Activated T-helper 2 cell treated with anti-CD3 and anti-CD28 coated beads, Interferon-gamma antibody, Interleukin-2, Interleukin-4, amounts not matched to agents 10 μg/mL and 5 μg/mL and 100 μg/mL, durations not matched to agents 14 hours and 24 hours and 36 hours (primary cell): ENCODE measurements at regions of chr7 and their contacts with region 1.

Region 1: GRCh38 chr7:39948956-39949928 is 814 bp upstream of the CDK13 start:
- DNase-seq: peak; percentile 99
- H3K4me3 Mint-ChIP-seq: peak overlapping the region; percentile 88
- H3K27ac Mint-ChIP-seq: peak overlapping the region; percentile 99
- H3K4me1 Mint-ChIP-seq: peaks cover 25% of the 10 kb centered on the region
- H3K27me3 Mint-ChIP-seq: no peaks in the 10 kb centered on the region

Region 2: DNA sequence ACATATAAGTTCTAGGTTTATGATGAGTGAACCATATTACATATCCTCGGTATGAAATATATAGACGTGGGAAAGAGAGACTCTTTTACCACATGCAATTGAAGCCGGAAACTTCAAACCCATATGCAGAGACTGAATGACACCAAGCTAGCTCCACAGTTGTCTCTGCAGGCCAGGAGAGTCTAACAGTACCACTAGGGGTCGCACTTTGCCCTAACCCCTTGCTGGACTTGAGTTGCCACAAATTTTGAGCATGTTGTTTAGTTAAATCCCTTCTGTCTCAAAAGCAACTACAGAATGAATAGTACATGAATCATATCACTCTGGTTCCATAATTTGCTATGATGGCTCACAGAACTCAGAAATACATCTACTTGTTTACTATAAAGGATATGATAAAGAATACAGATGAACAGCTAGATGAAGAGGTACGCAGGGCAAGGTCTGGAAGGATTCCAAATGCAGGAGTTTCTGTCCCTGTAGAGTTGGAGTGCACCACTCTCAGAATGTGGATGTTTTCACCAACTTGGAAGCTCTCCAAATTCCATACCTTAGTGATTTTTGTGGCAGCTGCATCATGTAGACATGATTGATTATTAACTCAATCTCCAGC is 495.4 kb before region 1 on chr7:
- intact Hi-C with region 1: no loop called
- DNase-seq: peak; percentile 37
- H3K4me3 Mint-ChIP-seq: no peak overlapping the region
- H3K27ac Mint-ChIP-seq: no peak overlapping the region
- H3K4me1 Mint-ChIP-seq: no peaks in the 10 kb centered on the region
- H3K27me3 Mint-ChIP-seq: peaks cover 7% of the 10 kb centered on the region

Region 3: GRCh38 chr7:39589323-39590111 is 359.7 kb before region 1 on chr7:
- intact Hi-C with region 1: loop called (anchors 2 kb)
- DNase-seq: peak; percentile 65
- H3K4me3 Mint-ChIP-seq: no peak overlapping the region
- H3K27ac Mint-ChIP-seq: peak overlapping the region; percentile 61
- H3K4me1 Mint-ChIP-seq: peaks cover 42% of the 10 kb centered on the region
- H3K27me3 Mint-ChIP-seq: peaks cover 2% of the 10 kb centered on the region

Region 4: DNA sequence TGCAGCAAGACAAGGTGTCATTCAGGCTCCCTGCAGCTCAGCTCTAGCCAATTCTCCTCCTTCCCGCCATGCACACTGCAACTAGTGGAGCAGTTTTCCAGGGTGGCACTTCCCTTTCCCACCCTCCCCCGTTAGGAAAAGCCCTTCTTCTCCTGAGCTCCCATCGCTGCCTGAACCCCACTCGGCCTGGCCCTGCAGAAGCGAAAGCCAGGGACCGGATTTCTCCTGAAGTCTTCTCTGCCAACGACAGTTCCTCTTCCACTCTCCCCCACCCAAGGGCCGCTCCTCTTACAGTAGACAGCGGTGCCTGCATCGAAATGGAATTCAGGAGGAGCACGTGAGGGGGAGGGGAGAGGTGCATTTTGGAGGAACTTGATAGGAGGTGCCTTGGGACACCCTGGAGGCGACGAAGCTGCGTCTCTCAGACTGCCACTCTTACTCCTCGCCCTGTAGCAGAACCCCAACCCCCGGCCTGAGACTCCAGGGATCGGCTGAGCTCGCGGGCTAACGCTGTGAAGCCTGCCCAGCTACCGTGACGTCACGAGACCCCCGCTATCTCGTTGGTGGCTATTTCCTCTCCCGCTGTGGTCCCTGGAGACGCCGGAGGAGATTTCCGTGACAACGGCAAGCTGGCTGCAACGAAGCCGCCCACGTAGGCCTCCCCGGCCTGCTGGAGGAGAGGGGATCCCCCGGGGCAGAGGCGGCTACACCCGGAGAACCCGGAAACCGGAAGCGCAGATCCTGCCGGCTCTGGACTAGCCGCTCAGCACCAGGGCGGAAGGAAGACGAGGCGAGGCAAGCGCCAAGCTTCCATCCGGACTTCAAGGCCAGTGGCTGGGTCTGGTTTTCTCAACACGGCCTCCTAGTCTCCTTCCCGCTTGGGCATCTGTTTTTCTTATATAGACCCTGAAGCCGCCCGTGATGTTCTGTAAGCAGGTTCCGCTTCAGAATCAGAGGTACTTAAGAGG is 216.1 kb before region 1 on chr7:
- intact Hi-C with region 1: loop called (anchors 5 kb)
- DNase-seq: peak; percentile 95
- H3K4me3 Mint-ChIP-seq: peak overlapping the region; percentile 85
- H3K27ac Mint-ChIP-seq: peak overlapping the region; percentile 81
- H3K4me1 Mint-ChIP-seq: peaks cover 33% of the 10 kb centered on the region
- H3K27me3 Mint-ChIP-seq: peaks cover 4% of the 10 kb centered on the region

Region 5: DNA sequence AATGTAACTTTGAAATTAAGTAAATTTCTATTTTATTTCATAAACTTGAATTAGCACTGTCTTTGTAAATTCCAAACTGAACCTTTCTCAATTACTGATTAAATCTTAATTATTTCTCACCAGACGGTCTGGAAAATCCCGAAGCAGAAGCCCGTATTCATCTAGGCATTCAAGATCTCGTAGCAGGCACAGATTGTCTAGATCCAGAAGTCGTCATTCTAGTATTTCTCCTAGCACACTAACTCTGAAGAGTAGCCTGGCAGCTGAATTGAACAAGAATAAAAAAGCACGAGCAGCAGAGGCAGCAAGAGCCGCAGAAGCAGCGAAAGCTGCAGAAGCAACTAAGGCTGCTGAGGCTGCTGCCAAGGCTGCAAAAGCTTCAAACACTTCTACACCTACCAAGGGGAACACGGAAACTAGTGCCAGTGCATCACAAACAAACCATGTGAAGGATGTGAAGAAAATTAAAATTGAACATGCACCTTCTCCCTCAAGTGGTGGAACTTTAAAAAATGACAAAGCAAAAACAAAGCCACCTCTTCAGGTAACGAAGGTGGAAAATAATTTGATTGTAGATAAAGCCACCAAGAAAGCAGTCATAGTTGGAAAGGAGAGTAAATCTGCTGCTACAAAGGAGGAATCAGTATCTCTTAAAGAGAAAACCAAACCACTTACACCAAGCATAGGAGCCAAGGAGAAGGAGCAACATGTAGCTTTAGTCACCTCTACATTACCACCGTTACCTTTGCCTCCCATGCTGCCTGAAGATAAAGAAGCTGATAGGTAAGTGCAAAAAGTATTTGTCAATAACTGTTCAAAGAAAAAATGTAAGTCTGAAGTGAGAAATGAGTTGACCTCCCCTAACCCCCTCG is 38.5 kb after region 1 on chr7:
- intact Hi-C with region 1: loop called (anchors 2 kb)
- DNase-seq: no peak
- H3K4me3 Mint-ChIP-seq: no peak overlapping the region
- H3K27ac Mint-ChIP-seq: no peak overlapping the region
- H3K4me1 Mint-ChIP-seq: peaks cover 37% of the 10 kb centered on the region
- H3K27me3 Mint-ChIP-seq: no peaks in the 10 kb centered on the region

Region 6: DNA sequence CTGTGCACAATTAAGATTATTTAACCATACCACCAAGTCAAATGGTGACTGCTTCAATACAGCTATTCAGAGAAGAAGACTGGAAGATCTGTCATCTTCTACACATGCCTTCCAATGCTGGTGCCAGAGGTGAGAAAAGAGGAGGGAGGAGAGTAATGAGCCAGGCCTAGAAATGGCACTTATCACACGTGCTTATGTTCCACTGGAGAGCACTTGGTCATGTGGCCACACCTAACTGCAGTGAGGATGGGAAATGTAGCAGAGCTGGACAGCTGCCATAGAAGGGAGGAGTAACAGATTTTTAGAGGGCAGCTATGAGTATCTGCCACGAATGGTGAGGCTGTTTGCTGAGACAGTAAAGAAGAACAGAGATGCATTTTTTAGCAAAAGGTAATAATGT is 108.0 kb after region 1 on chr7:
- intact Hi-C with region 1: loop called (anchors 1 kb)
- DNase-seq: no peak
- H3K4me3 Mint-ChIP-seq: no peak overlapping the region
- H3K27ac Mint-ChIP-seq: no peak overlapping the region
- H3K4me1 Mint-ChIP-seq: peaks cover 5% of the 10 kb centered on the region
- H3K27me3 Mint-ChIP-seq: no peaks in the 10 kb centered on the region